Pancreas (tissue), 10 donors: ENCODE measurements at regions of chr11 and their contacts with region 1.

Region 1: DNA sequence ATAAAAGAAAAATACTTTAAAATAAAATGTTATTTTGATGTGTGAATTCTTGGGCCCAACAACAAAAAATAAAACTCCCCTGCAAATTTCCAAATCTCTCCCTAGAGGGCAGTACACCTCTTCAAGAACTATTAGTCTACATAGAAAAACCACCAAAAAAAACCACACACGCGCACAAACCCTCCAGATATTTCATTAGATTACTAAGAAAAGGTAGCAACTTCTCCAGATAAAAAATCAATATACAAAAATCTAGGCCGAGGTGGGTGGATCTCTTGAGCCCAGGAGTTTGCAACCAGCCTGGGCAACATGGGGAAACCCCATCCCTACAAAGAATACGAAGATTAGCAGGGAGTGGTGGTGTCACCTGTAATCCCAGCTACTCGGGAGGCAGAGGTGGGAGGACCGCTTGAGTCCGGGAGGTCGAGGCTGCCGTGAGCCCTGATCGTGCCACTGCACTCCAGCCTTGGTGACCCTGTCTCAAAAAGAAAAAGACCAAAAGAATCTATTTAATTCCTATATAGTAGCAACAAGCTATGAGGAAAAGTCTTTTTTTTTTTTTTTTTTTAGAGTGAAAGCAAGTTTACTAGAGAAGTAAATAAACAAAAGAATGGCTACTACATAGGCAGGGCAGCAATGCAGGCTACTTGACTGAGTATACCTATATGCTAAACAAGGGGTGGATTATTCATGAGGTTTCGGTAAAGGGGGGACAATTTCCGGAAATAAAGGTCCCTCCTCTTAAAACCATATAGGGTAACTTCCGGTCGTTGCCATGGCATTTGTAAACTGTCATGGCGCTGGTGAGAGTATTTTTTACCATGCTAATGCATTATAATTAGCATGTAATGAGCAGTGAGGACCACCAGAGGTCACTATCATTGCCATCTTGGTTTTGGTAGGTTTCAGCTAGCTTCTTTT is 13.1 kb downstream of the B3GNT6 start:
- DNase-seq: peak in 3 of 6 donors; percentile 81 to 86 (median 84)
- ATAC-seq: peak; percentile 89 to 93 (median 90)
- H3K4me3 ChIP-seq: peak overlapping the region in 3 of 4 donors; percentile 20 to 44 (median 24)
- H3K27ac ChIP-seq: peak overlapping the region in 2 of 4 donors; percentile 50 to 76
- H3K4me1 ChIP-seq: no peaks in the 10 kb centered on the region
- H3K27me3 ChIP-seq: peaks cover 0 to 3% (median 0%) of the 10 kb centered on the region in 4 donors
- CTCF ChIP-seq: peak; percentile 59 to 73 (median 70)

Region 2: DNA sequence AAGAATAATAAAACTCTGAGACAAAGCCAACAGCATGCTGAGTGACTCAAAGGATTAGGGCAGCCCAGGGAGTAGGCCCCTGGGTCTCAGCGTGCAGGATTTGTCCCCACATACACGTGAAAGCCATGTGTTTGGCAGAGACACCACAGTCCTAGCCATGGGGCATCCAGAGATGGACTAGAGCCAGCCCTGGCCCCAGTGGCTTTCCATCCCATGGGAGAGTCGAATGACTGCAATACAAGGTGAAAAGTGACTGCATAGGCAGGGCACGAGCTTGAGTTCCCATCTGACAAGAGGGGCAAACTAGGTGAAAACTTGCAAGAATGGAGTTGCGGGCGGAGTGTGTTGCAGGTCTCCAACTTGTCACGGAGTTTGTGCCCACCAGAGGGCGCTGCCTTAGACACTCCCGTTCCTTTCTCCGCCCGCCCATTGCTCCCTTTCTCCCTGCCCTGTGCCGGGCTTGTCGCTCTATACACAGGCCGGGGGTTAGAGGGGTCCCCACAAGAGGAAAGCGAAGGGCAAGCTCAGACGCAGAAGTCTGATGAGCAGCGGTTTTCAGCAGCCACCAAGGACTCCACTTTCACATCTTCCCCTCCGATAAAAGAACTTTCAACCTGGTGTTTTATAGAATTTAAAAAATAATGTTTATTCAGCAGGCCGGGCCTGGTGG is 239.9 kb before region 1 on chr11:
- intact Hi-C with region 1: loop called in 1 of 3 experiments (anchors 10 kb)
- DNase-seq: peak; percentile 66 to 94 (median 86)
- ATAC-seq: peak; percentile 79 to 90 (median 86)
- H3K4me3 ChIP-seq: peak overlapping the region in 2 of 4 donors; percentile 7 to 12
- H3K27ac ChIP-seq: no peak overlapping the region
- H3K4me1 ChIP-seq: peaks cover 0 to 11% (median 10%) of the 10 kb centered on the region in 3 donors
- H3K27me3 ChIP-seq: no peaks in the 10 kb centered on the region
- CTCF ChIP-seq: peak; percentile 69 to 85 (median 75)

Region 3: DNA sequence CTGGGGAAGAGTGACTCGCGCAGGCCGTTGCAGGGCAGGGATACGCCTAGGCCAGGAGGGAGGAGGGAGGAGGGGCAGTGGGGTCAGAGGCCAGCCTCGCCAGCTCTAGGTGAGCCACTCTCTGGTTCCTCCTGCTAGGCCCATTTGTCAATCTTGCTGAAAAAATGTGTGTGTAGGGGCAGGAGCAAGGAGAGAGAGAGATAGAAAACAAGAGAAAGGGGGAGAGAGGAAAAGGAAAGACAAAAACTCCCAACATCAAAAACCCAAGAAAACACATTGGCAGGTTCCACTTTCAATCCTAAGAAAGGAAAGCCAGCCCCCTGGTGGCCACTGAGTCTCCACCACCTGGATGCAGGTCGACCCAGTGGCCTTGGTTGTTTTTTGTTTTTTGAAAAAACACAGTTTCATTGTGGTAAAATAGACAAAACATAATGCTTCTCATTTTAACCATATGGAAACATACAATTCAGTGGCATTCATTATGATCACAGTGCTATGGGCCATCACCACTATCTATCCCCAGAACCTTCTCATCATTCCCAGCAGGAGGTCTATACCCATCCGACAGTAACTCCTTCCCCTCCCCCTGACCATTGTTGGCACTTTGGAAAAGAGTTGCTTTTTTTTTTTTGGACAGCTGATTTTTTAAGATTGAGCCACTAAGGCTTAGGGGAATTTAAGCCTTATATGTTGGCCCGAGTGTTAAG is 66.3 kb after region 1 on chr11:
- intact Hi-C with region 1: loop called in 1 of 3 experiments (anchors 5 kb)
- DNase-seq: peak in 3 of 6 donors; percentile 21 to 54 (median 45)
- ATAC-seq: peak in 3 of 4 donors; percentile 59 to 75 (median 65)
- H3K4me3 ChIP-seq: no peak overlapping the region
- H3K27ac ChIP-seq: no peak overlapping the region
- H3K4me1 ChIP-seq: no peaks in the 10 kb centered on the region
- H3K27me3 ChIP-seq: no peaks in the 10 kb centered on the region
- CTCF ChIP-seq: peak in 3 of 4 donors; percentile 39 to 56 (median 51)

Region 4: DNA sequence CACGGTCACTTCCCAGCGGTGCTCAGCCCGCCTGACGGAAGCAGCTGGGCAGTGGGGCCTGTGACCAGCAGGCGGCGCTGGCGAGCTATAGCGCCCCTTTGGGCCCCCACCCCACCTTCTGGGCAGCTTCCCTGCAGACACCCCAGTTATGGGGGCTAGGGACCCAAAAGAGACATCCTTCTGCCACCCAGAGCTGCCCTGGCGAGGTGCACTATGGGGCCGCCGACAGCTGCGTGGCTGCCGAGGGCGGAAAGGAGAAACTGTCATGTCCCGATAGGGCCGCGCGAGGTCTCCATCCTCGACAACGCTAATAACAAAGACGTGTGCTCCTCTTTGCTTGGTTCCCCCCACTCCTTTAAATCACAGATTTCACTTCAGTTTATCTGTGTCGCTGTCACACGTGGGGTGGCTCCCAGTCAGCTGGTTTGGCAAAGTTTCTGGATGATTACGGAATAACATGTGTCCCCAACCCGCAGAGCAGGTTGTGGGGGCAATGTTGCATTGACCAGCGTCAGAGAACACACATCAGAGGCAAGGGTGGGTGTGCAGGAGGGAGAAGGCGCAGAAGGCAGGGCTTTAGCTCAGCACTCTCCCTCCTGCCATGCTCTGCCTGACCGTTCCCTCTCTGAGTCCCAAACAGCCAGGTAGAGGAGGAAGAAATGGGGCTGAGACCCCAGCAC is 80.1 kb after region 1 on chr11:
- intact Hi-C with region 1: no loop called
- DNase-seq: peak in 5 of 6 donors; percentile 50 to 91 (median 73)
- ATAC-seq: peak; percentile 74 to 84 (median 78)
- H3K4me3 ChIP-seq: peak overlapping the region; percentile 18 to 52 (median 32)
- H3K27ac ChIP-seq: peak overlapping the region in 3 of 4 donors; percentile 27 to 79 (median 63)
- H3K4me1 ChIP-seq: peaks cover 0 to 8% (median 5%) of the 10 kb centered on the region in 3 donors
- H3K27me3 ChIP-seq: no peaks in the 10 kb centered on the region
- CTCF ChIP-seq: peak; percentile 99